AG04449 (cell line): ENCODE measurements at regions of chr21 and their contacts with region 1.

Region 1: GRCh38 chr21:43938751-43939442 is 73.2 kb upstream of the TRAPPC10 start:
- DNase-seq: no peak
- H3K4me3 ChIP-seq: peak overlapping the region; percentile 45
- CTCF ChIP-seq: peak; percentile 97

Region 2: GRCh38 chr21:43949499-43950208 is 10.8 kb after region 1 on chr21:
- CTCF ChIA-PET with region 1: interaction called, 23 read pairs
- POLR2A ChIA-PET with region 1: no interaction called
- DNase-seq: no peak
- H3K4me3 ChIP-seq: no peak overlapping the region
- CTCF ChIP-seq: no peak

Region 3: GRCh38 chr21:44537930-44538911 is 599.3 kb after region 1 on chr21:
- CTCF ChIA-PET with region 1: no interaction called
- POLR2A ChIA-PET with region 1: no interaction called
- DNase-seq: no peak
- H3K4me3 ChIP-seq: no peak overlapping the region
- CTCF ChIP-seq: no peak